Ascending aorta (tissue), 2 donors: ENCODE measurements at regions of chr7 and their contacts with region 1.

Region 1: DNA sequence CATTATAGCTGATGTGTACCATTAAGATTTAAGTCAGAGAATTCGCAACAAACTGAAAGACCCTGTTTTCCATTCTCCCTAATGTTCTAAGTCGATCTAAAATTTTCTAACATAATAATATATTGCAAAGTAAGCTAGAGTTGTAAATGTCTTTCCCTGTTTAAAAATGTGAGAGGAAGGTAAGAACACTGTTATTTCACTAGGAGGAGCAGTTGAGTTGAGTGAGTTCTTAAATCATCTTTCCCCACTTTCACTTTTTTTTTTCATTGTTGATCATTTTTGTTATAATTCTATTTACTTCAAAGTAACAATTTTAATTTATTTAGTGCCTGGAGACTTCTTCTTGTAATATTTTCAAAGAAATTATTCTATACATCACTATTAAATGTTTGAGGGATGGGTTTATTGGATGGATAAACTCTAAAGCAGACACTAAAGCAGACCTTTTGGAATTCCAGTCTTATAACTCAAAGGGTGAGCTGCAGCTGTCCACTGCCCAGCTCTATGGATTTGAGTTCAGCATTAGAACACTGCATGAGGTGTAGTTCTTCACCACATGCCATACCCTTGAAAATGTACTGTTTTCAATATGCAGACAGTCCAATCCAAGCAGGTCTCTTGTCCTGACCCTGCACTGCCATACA is 181.3 kb upstream of the FZD1 start:
- DNase-seq: no peak
- H3K4me3 ChIP-seq: peak overlapping the region in 1 of 2 donors; percentile 37
- H3K27ac ChIP-seq: peak overlapping the region; percentile 20 to 59
- H3K4me1 ChIP-seq: peaks cover 4 to 31% of the 10 kb centered on the region in 2 donors
- H3K27me3 ChIP-seq: no peaks in the 10 kb centered on the region
- CTCF ChIP-seq: peak; percentile 21 to 64 (median 59)

Region 2: DNA sequence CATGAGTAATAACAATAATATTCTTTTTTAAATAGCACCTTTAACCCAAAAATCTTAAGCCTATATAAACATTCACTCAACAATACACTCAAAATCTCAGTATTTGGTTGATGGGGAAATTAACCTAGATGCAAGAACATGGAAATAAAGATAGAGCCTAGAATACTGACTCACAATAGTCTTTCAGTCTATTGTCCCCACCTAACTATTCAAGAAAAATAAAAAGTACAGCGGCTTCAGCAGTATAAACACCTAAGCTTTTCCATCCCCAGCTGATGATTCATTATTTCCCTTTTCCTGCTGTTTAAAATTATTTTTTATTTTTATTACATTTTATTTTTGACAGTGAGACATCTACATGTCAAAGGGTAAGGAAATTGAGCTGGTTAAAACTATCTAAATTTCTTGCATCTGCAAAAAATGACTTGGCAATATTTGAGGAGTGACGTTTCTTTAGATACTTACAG is 382.7 kb after region 1 on chr7:
- intact Hi-C with region 1: loop called (anchors 5 kb)
- DNase-seq: no peak
- H3K4me3 ChIP-seq: no peak overlapping the region
- H3K27ac ChIP-seq: peak overlapping the region; percentile 43 to 65
- H3K4me1 ChIP-seq: peaks cover 0 to 18% of the 10 kb centered on the region in 2 donors
- H3K27me3 ChIP-seq: no peaks in the 10 kb centered on the region
- CTCF ChIP-seq: no peak

Region 3: DNA sequence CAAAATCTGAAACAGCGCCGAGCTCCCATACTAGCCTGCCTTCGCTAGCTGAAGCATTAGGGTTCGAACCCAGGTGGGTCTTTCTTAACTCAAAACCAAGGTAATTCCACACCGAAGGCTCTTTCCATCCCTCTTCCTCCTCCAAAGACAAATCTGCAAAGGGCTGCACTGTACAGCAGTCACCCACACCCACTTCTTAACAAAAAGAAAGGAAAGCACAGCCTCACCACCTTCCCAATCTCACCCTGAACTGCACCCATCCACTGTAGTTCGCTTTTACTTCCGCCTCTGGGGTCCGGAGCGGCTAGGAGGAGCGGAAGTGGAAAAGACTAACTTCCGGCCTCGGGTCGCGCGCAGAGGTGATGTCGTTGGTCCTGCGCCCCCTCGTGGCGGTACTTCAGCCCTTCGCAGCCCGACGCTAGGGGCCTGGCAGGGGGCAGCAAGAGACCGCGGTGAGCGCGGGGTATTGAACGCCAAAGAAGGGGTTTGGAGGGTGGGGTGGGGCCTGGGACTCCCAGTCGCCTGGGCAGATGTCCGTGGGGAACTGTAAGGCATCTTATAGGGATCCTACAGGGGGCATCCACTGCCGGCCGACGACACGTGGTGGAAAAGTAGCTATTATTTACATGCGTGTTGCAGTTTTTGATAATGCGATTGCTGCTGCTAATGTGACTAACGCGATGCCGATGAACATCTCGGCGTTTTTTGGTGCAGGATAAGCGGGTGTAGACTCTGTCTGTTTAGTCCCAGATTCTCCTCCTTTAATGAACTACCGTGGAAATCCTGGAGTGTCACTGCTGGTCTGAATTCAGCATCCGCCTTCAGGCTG is 797.7 kb after region 1 on chr7 and contains the start of gene MTERF1:
- intact Hi-C with region 1: loop called (anchors 5 kb)
- DNase-seq: peak; percentile 23 to 93
- H3K4me3 ChIP-seq: peak within 1 kb of the TSS; percentile 82 to 83
- H3K27ac ChIP-seq: peak within 1 kb of the TSS in 1 of 2 donors; percentile 9
- H3K4me1 ChIP-seq: peaks cover 0 to 9% of the 10 kb centered on the region in 2 donors
- H3K27me3 ChIP-seq: no peaks in the 10 kb centered on the region
- CTCF ChIP-seq: peak; percentile 83 to 98 (median 96)
- total RNA-seq, gene MTERF1: 5.0 TPM